Activated T-helper 1 cell treated with anti-CD3 and anti-CD28 coated beads, Interleukin-12 subunit alpha, Interleukin-12 subunit beta, Interleukin-2, Interleukin-4 antibody, amounts not matched to agents 30 ng/mL and 10 ng/mL and 1 ng/mL, durations not matched to agents 14 hours and 24 hours and 36 hours (primary cell): ENCODE measurements at regions of chr15 and their contacts with region 1.

Region 1: DNA sequence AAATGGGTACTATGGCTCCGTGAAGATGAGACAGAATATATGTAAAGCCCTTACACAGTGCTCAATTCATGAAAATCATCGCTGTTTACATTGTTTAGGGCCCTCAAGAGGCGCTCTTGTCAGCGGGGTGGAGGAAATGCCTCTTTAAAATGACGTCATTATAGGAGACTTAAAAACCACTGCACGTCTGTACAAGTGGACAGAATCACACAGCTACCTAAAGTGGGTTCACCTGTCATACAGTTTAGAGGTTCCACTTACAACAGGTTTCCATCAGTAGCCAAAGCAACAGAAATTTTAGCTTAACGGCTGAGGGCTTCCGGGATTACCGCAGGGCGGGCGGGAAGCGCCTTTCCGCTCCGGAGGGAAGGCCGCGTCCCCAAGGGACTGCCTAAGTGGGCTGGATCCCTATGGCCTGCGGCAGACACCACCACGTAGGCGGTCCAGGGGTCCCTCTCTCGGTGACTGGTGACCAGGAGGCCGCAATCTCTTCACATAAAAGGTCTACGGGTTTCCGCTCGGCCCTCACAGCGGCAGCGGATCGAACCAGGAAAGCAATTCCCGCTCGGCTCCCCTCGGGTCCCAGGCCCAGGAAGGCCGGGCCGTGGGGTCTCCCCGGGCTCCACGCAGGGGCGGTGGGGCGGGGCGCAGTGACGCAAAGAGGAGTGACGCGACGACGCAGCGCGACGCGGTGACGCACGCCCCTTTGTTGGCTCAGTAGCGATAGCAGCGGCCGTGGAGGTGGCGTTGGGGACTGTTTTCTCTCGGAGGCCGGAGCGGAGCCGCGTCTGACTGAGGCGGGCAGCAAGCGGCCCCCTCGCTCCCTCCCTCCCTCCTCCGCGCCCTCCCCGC is at the start of gene ARIH1:
- DNase-seq: peak; percentile 95
- H3K4me3 Mint-ChIP-seq: peak within 1 kb of the TSS; percentile 95
- H3K27ac Mint-ChIP-seq: peak within 1 kb of the TSS; percentile 99
- H3K4me1 Mint-ChIP-seq: peaks cover 33% of the 10 kb centered on the region
- H3K27me3 Mint-ChIP-seq: no peaks in the 10 kb centered on the region
- total RNA-seq, gene ARIH1: 140 and 144 TPM in 2 replicates

Region 2: GRCh38 chr15:72117486-72118399 is 356.1 kb before region 1 on chr15 and contains the start of gene MYO9A:
- intact Hi-C with region 1: loop called (anchors 1 kb)
- DNase-seq: peak; percentile 95
- H3K4me3 Mint-ChIP-seq: peak within 1 kb of the TSS; percentile 93
- H3K27ac Mint-ChIP-seq: peak within 1 kb of the TSS; percentile 95
- H3K4me1 Mint-ChIP-seq: peaks cover 23% of the 10 kb centered on the region
- H3K27me3 Mint-ChIP-seq: peaks cover 16% of the 10 kb centered on the region
- total RNA-seq, gene MYO9A: 15.2 and 16.4 TPM in 2 replicates

Region 3: DNA sequence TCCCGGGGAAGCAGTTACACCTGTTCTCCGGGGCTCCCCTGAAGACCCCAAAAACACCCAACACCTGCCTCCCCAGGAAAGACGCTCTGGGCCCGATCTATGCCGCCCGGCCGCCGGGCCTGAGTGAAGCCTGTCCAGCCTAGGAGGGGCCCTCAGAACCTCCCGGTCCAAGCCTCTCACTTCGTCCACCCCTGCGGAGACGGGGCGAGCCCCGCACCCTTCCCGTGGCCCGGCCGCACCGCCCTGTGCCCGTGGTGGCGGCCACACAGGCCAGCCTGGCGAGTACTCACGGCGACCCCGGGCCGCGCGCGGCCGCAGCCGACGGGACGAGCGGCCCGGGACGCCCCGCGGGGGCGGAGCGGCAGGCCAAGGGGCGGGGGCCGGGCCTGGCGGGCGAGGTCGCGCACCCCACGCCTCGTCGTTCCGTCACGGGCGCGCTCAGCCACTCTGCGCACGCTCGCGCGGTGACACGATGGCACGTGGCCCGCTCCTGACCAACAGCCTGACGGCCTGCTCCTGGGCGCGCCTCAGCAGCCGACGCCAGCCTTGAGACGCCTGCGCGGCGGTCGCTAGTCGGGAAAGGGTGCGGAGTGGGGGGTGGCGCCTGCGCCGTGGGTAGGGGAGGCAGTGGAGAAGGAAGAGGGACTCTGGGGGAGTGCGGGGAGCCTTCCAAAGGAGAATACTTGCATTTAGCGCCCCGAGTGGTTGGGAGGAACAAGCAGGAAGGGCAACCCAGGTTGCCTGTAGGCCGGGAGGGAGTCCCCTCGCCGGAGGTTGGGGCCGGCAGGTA is 201.4 kb before region 1 on chr15 and contains the start of gene PARP6:
- intact Hi-C with region 1: loop called (anchors 1 kb)
- DNase-seq: peak; percentile 99
- H3K4me3 Mint-ChIP-seq: peak within 1 kb of the TSS; percentile 95
- H3K27ac Mint-ChIP-seq: peak within 1 kb of the TSS; percentile 90
- H3K4me1 Mint-ChIP-seq: peaks cover 43% of the 10 kb centered on the region
- H3K27me3 Mint-ChIP-seq: peaks cover 3% of the 10 kb centered on the region
- total RNA-seq, gene PARP6: 79.3 and 87.1 TPM in 2 replicates

Region 4: DNA sequence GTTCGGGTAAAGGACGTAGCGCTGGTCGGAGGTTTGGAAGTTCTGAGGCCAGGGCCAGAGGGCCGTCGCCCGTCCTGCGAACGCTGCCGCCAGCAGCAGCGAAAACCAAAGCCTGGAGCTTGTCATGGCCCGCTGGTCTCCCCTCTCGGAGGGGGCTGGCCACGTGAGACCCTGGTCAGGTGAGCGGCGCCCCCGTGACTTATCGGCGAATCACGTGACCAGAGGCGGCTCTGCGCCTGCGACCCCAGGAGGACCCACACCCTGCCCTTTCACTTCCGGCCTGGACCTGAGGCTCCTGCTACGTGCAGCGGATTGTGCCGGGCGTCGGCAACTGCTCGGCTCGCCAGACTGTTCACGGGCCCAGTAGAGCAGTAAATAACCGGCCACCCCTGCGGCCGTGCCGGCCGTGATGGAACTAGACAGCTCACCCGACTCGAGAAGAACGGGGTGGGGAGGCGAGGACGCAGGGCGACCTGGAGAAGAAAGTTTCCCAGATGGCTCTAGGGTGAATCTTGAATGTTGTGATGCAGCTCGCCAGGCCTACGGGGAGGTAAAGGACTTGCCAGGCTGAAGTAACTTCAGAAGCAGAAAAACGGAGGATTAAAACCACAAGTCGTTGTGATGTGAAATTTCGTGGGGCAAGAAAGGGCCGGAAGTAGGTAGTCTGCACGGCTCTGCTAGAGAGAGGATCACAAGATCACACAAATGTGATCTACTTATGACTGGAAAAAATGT is 97.8 kb before region 1 on chr15 and contains the start of gene HEXA:
- intact Hi-C with region 1: loop called (anchors 1 kb)
- DNase-seq: peak; percentile 94
- H3K4me3 Mint-ChIP-seq: peak within 1 kb of the TSS; percentile 89
- H3K27ac Mint-ChIP-seq: peak within 1 kb of the TSS; percentile 93
- H3K4me1 Mint-ChIP-seq: peaks cover 31% of the 10 kb centered on the region
- H3K27me3 Mint-ChIP-seq: peaks cover 4% of the 10 kb centered on the region
- total RNA-seq, gene HEXA: 55.7 and 61.0 TPM in 2 replicates

Region 5: GRCh38 chr15:72532991-72533601 is 59.3 kb after region 1 on chr15:
- intact Hi-C with region 1: loop called (anchors 2 kb)
- DNase-seq: no peak
- H3K4me3 Mint-ChIP-seq: no peak overlapping the region
- H3K27ac Mint-ChIP-seq: no peak overlapping the region
- H3K4me1 Mint-ChIP-seq: peaks cover 26% of the 10 kb centered on the region
- H3K27me3 Mint-ChIP-seq: no peaks in the 10 kb centered on the region

Region 6: GRCh38 chr15:72685925-72686794 is 212.3 kb after region 1 on chr15 and contains the starts of genes BBS4 and HIGD2B:
- intact Hi-C with region 1: loop called (anchors 2 kb)
- DNase-seq: peak; percentile 84
- H3K4me3 Mint-ChIP-seq: peak within 1 kb of the TSS; percentile 93
- H3K27ac Mint-ChIP-seq: peak within 1 kb of the TSS; percentile 87
- H3K4me1 Mint-ChIP-seq: peaks cover 21% of the 10 kb centered on the region
- H3K27me3 Mint-ChIP-seq: peaks cover 4% of the 10 kb centered on the region
- total RNA-seq, gene BBS4: 10.0 and 10.3 TPM in 2 replicates
- total RNA-seq, gene HIGD2B: 0.29 TPM in 1 of 2 replicates, not detected in the other

Region 7: GRCh38 chr15:72809329-72809728 is 335.5 kb after region 1 on chr15:
- intact Hi-C with region 1: no loop called
- DNase-seq: no peak
- H3K4me3 Mint-ChIP-seq: no peak overlapping the region
- H3K27ac Mint-ChIP-seq: no peak overlapping the region
- H3K4me1 Mint-ChIP-seq: peaks cover 13% of the 10 kb centered on the region
- H3K27me3 Mint-ChIP-seq: no peaks in the 10 kb centered on the region